A673 (cell line): ENCODE measurements at regions of chr11 and their contacts with region 1.

Region 1: GRCh38 chr11:21185959-21186358 is 516.6 kb downstream of the NELL1 start:
- DNase-seq: no peak
- H3K4me3 ChIP-seq: no peak overlapping the region
- H3K27ac ChIP-seq: no peak overlapping the region
- H3K4me1 ChIP-seq: no peaks in the 10 kb centered on the region
- H3K27me3 ChIP-seq: no peaks in the 10 kb centered on the region
- CTCF ChIP-seq: no peak

Region 2: DNA sequence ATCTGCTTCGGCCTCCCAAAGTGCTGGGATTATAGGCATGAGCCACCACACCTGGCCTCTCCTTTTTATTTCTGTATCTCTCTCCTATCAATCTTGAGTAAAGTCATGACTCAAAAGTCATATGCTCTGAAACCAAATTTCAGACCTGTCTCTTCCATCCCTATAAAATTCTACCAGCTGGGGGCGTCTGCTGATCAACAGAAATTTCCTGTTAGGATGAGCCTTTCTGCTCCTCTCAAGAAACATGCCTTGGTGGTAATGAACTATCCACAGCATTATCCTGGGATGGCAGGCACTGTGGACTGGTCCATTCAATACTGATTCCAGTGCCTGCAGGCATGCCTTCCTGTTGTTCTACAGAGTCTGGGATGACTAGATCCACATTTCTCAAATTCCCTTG is 44.0 kb before region 1 on chr11:
- CTCF ChIA-PET with region 1: no interaction called
- POLR2A ChIA-PET with region 1: no interaction called
- intact Hi-C with region 1: loop called (anchors 5 kb)
- DNase-seq: peak; percentile 48
- H3K4me3 ChIP-seq: no peak overlapping the region
- H3K27ac ChIP-seq: no peak overlapping the region
- H3K4me1 ChIP-seq: no peaks in the 10 kb centered on the region
- H3K27me3 ChIP-seq: no peaks in the 10 kb centered on the region
- CTCF ChIP-seq: peak; percentile 50; the same call in 1 of the 2 replicates